ENCODE measurements at regions of chr7 and their contacts with region 1.

Region 1: GRCh38 chr7:139075031-139075652 is 34.4 kb downstream of the ZC3HAV1 start:
- DNase-seq: peak; percentile 37
- H3K4me3 ChIP-seq: no peak overlapping the region
- H3K27me3 ChIP-seq: no peaks in the 10 kb centered on the region
- CTCF ChIP-seq: peak; percentile 79

Region 2: GRCh38 chr7:138886501-138886917 is 188.6 kb before region 1 on chr7:
- CTCF ChIA-PET with region 1: interaction called, 26 read pairs
- POLR2A ChIA-PET with region 1: no interaction called
- DNase-seq: no peak
- H3K4me3 ChIP-seq: no peak overlapping the region
- H3K27me3 ChIP-seq: no peaks in the 10 kb centered on the region
- CTCF ChIP-seq: peak; percentile 60

Region 3: DNA sequence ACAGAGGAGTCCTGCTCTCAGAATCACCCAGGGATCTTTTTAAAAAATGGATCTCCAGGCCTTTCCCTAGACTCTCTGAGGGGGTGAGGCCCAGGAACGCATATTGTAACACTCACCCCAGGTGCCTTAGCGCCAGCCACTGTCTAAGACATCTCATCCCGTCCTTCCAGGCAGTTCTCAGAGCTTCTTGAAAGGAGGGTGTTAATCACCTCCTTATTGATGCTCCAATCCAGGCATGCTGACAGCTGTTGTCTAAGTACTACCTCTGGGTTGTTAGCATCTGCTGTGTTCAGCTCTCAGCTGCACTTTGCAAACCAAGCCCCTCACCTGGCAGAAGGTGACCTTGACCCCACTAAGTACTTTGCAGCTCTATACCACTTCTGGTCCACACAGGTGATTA is 130.0 kb before region 1 on chr7:
- CTCF ChIA-PET with region 1: no interaction called
- POLR2A ChIA-PET with region 1: no interaction called
- DNase-seq: no peak
- H3K4me3 ChIP-seq: no peak overlapping the region
- H3K27me3 ChIP-seq: no peaks in the 10 kb centered on the region
- CTCF ChIP-seq: no peak

Region 4: GRCh38 chr7:139016931-139017511 is 58.1 kb before region 1 on chr7:
- CTCF ChIA-PET with region 1: interaction called, 23 read pairs
- POLR2A ChIA-PET with region 1: no interaction called
- DNase-seq: no peak
- H3K4me3 ChIP-seq: no peak overlapping the region
- H3K27me3 ChIP-seq: no peaks in the 10 kb centered on the region
- CTCF ChIP-seq: peak; percentile 76

Region 5: GRCh38 chr7:139058943-139059342 is 16.2 kb before region 1 on chr7:
- CTCF ChIA-PET with region 1: interaction called, 24 read pairs
- POLR2A ChIA-PET with region 1: no interaction called
- DNase-seq: no peak
- H3K4me3 ChIP-seq: no peak overlapping the region
- H3K27me3 ChIP-seq: no peaks in the 10 kb centered on the region
- CTCF ChIP-seq: no peak

Region 6: GRCh38 chr7:139086454-139086853 is 11.3 kb after region 1 on chr7:
- CTCF ChIA-PET with region 1: interaction called, 22 read pairs
- POLR2A ChIA-PET with region 1: no interaction called
- DNase-seq: no peak
- H3K4me3 ChIP-seq: no peak overlapping the region
- H3K27me3 ChIP-seq: no peaks in the 10 kb centered on the region
- CTCF ChIP-seq: no peak

Region 7: DNA sequence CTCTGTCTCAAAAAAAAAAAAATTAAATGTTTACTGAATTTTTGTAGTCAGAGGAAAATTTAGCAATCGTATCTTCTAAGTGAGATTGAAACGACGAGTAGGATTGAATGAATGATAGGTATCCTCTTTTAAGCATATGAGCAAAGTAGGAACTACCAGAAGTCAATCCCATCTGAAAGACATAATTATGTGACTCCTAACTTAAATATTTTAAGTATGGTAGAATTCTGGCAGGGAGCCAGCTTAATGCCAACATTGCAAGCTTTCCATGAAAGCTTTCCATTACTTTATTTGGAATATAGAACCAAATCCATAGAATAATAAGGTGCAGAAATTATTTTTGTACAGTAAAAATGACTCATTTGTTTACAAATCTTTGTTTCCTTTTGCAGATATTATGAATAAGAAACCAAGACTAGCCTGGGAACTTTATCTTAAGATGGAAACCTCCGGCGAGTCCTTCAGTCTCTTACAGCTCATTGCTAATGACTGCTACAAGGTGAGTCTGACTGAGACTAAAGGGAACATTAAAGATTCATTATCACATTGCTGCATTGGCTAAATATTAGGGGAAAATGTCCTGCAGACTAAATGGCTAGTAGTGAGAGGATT is 105.7 kb after region 1 on chr7:
- CTCF ChIA-PET with region 1: no interaction called
- POLR2A ChIA-PET with region 1: no interaction called
- DNase-seq: no peak
- H3K4me3 ChIP-seq: no peak overlapping the region
- H3K27me3 ChIP-seq: no peaks in the 10 kb centered on the region
- CTCF ChIP-seq: no peak

Region 8: DNA sequence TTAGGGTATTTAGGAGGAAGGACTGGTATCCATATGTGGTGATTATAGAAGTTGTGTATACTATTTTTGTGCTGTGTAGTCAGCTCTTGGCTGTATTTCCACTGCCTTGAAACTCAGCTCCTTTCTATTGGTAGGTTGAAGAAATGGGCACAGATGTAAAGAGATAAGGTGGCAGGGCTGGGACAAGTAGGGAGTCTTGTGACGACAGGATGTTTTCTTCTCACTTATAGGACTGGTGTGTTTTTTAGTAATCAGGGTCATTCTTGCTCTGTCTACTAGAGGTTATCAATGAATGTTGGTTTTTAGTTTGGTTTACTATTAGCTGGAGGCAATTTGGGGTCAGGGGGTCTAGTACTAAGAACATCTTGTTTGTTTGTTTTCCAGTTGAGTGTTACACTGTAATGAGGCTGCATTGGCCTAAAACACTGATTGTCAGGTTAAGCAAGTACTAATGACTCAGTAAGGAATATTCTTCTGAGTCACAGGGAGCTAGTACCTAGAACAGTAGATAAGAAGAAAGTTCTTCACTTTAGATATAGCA is 167.7 kb after region 1 on chr7:
- CTCF ChIA-PET with region 1: no interaction called
- POLR2A ChIA-PET with region 1: interaction called, 14 read pairs
- DNase-seq: no peak
- H3K4me3 ChIP-seq: no peak overlapping the region
- H3K27me3 ChIP-seq: no peaks in the 10 kb centered on the region
- CTCF ChIP-seq: no peak

Measured in BJ (cell line).